Caco-2 (cell line): ENCODE measurements at regions of chr20 and their contacts with region 1.

Region 1: GRCh38 chr20:20593447-20594170 is 118.8 kb downstream of the RALGAPA2 start:
- DNase-seq: peak; percentile 53 to 61
- H3K4me3 ChIP-seq: no peak overlapping the region
- H3K4me3 Mint-ChIP-seq: no peak overlapping the region
- H3K27ac Mint-ChIP-seq: no peak overlapping the region
- H3K4me1 ChIP-seq: no peaks in the 10 kb centered on the region
- H3K4me1 Mint-ChIP-seq: no peaks in the 10 kb centered on the region
- H3K27me3 ChIP-seq: no peaks in the 10 kb centered on the region
- H3K27me3 Mint-ChIP-seq: no peaks in the 10 kb centered on the region
- CTCF ChIP-seq: peak; percentile 58 to 66

Region 2: GRCh38 chr20:20130399-20130798 is 463.2 kb before region 1 on chr20:
- CTCF ChIA-PET with region 1: interaction called, 5 read pairs
- POLR2A ChIA-PET with region 1: no interaction called
- intact Hi-C with region 1: loop called (anchors 2 kb)
- DNase-seq: peak in 1 of 2 experiments; percentile 28
- H3K4me3 ChIP-seq: no peak overlapping the region
- H3K4me3 Mint-ChIP-seq: no peak overlapping the region
- H3K27ac Mint-ChIP-seq: no peak overlapping the region
- H3K4me1 ChIP-seq: peaks cover 7% of the 10 kb centered on the region
- H3K4me1 Mint-ChIP-seq: no peaks in the 10 kb centered on the region
- H3K27me3 ChIP-seq: no peaks in the 10 kb centered on the region
- H3K27me3 Mint-ChIP-seq: no peaks in the 10 kb centered on the region
- CTCF ChIP-seq: peak; percentile 16 to 28

Region 3: DNA sequence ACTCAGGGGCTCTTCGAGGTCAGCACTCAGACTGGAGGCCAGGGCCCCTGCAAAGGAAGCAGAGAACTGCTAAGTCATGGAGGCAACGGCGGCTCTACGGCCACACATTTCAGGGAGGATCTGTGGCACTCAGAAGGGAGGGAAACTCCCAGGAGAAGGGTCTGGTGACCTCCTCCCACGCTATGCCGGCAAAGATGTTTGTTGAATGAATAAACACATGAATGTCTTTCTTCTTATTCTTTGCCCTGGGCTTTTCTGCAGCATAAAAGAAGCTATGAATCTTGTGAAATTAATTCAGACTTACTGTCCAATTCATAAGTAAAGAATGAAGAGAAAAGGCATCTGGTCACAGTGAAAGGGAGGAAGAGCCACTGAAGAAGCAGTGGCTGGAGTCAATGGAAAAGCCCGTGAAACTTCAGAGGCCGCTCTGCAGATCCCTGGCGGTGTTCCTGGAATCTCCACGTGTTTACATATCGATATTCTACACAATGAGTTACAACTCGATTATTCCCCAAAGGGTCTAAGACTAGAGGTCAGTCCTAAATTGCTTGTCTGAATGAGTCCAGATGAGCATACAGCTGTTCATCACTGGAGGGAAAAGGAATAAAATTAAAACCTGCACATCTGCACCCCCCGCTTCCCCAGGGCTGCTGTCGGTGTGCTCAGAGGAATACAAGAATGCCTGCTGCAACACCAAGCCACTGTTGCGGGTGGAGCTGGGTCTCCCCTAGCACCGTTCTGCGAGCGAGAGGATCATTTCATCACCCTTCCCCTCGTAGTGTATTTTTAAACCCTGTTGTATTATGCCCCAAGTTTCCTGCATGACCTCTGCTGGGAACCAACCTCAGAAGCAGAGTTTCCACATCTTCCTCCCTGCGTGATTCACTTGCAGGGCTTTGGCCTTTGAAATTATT is 200.1 kb before region 1 on chr20:
- CTCF ChIA-PET with region 1: no interaction called
- POLR2A ChIA-PET with region 1: no interaction called
- intact Hi-C with region 1: no loop called
- DNase-seq: no peak
- H3K4me3 ChIP-seq: no peak overlapping the region
- H3K4me3 Mint-ChIP-seq: no peak overlapping the region
- H3K27ac Mint-ChIP-seq: no peak overlapping the region
- H3K4me1 ChIP-seq: no peaks in the 10 kb centered on the region
- H3K4me1 Mint-ChIP-seq: no peaks in the 10 kb centered on the region
- H3K27me3 ChIP-seq: no peaks in the 10 kb centered on the region
- H3K27me3 Mint-ChIP-seq: no peaks in the 10 kb centered on the region
- CTCF ChIP-seq: no peak

Region 4: DNA sequence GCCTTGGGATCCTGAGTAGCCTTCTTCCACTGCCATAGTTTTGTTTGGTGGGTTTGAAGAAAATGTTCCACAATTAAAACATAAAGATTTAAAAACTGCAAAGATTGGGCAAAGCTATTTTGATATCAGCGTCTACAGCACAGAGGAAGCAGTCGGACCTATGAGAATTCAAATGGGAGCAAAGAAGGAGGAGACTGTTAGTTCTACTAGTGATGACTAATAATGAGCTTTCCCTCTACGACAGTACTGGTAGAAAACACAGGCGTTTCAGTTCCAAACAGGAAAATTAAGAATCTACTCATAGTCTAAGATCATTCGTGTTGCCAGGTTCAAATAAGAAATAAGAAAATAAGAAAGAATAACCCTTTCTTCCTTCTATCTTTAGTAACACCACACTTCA is 104.6 kb before region 1 on chr20:
- CTCF ChIA-PET with region 1: no interaction called
- POLR2A ChIA-PET with region 1: no interaction called
- intact Hi-C with region 1: no loop called
- DNase-seq: no peak
- H3K4me3 ChIP-seq: no peak overlapping the region
- H3K4me3 Mint-ChIP-seq: no peak overlapping the region
- H3K27ac Mint-ChIP-seq: no peak overlapping the region
- H3K4me1 ChIP-seq: no peaks in the 10 kb centered on the region
- H3K4me1 Mint-ChIP-seq: no peaks in the 10 kb centered on the region
- H3K27me3 ChIP-seq: no peaks in the 10 kb centered on the region
- H3K27me3 Mint-ChIP-seq: no peaks in the 10 kb centered on the region
- CTCF ChIP-seq: no peak